K562 (cell line): ENCODE measurements at regions of chr2 and their contacts with region 1.

Region 1: GRCh38 chr2:86675511-86676015 is 44.5 kb upstream of the RMND5A start:
- DNase-seq: no peak
- ATAC-seq: no peak
- H3K4me3 ChIP-seq: no peak overlapping the region
- H3K27ac ChIP-seq: no peak overlapping the region
- H3K4me1 ChIP-seq: no peaks in the 10 kb centered on the region
- H3K27me3 ChIP-seq: peaks cover 0 to 3% of the 10 kb centered on the region in 2 experiments; a peak in 3 of 5 replicates
- CTCF ChIP-seq: 0 out of 6 replicates have a peak, but pooled peaks of 1 of the 3 experiments have one; percentile 17
- EP300 ChIP-seq: no peak
- POLR2A ChIP-seq: no peak
- RAD21 ChIP-seq: no peak

Region 2: DNA sequence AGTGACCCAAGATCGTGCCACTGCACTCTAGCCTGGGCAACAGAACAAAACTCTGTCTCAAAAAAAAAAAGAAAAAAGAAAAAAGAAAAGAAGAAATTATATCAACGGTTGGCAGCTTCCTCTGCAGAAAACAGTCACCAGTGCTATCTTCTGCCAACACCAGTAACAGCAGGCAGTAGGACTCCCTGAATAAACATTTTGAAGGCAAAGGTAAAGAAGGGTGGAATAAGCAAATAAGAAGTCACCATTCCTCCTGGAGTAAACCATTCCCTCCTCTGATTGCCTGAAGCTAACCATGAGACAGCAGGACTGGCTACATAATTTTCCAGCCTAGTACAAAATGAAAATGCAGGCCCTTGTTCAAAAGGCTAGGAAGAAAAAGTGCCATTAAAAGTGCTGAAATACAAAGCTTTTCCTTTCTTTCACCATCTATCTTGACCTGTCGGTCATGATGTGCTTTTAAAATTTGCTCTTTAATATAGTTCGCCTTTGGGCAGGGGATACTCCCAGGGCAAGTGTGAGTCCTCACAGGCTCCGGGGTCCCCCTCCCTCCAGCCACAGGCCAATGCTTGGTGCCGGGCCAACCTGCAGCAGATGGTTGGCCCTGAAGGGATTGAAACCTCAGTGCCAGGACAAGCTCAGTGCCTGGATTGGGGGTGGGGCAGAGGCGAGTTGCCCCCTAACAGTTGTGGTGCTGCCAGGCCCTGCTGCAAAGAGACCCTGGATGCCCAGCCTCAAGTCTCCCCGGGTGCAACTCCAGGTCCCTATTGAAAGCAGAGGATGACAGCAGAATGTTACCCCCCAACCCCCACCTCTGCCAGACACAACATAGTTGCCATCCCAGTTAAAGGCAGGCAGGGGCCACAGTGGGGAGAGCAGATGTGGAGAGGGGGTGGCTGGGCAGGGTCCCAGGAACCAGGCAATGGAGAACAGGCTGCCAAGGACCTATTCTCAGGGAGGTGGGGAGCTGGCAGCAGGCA is 42.6 kb before region 1 on chr2:
- CTCF ChIA-PET with region 1: no interaction called
- POLR2A ChIA-PET with region 1: no interaction called
- in situ Hi-C with region 1: loop called (anchors 5 kb)
- intact Hi-C with region 1: no loop called
- DNase-seq: no peak
- ATAC-seq: no peak
- H3K4me3 ChIP-seq: no peak overlapping the region
- H3K27ac ChIP-seq: no peak overlapping the region
- H3K4me1 ChIP-seq: 0 out of 5 replicates have a peak, but pooled peaks cover 0 to 3% of the 10 kb centered on the region in 2 experiments
- H3K27me3 ChIP-seq: no peaks in the 10 kb centered on the region
- CTCF ChIP-seq: no peak
- EP300 ChIP-seq: no peak
- POLR2A ChIP-seq: no peak
- RAD21 ChIP-seq: no peak

Region 3: DNA sequence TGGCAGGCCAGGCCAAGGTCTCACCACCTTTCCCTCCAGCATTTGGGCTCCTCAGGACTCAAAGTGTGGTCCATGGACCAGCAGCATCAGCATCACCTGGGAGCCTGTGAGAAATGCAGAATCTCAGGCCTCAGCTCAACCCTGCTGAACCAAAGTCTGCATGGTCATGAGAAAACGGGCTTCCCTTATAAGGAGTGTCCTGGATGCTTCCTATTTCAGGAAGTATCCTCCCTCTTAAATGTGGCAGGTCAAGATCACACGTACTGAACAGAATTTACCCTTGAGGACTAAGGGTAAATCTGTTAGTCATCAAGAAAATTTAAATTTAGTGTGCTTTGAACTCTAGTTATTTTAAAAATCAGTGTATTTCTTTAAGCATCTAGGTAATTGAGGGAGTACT is 103.4 kb after region 1 on chr2:
- CTCF ChIA-PET with region 1: no interaction called
- POLR2A ChIA-PET with region 1: no interaction called
- in situ Hi-C with region 1: no loop called
- intact Hi-C with region 1: no loop called
- DNase-seq: no peak
- ATAC-seq: peak; percentile 28; the same call in 1 of the 3 replicates
- H3K4me3 ChIP-seq: no peak overlapping the region
- H3K27ac ChIP-seq: no peak overlapping the region
- H3K4me1 ChIP-seq: no peaks in the 10 kb centered on the region; a peak in 1 of 5 replicates
- H3K27me3 ChIP-seq: peaks cover 0 to 9% of the 10 kb centered on the region in 2 experiments; a peak in 3 of 5 replicates
- CTCF ChIP-seq: no peak
- EP300 ChIP-seq: no peak
- POLR2A ChIP-seq: no peak
- RAD21 ChIP-seq: no peak